Activated B cell treated with CpG ODN at 0.5 μM for 24 hours (primary cell): ENCODE measurements at regions of chr4 and their contacts with region 1.

Region 1: GRCh38 chr4:40682290-40683101 is 52.8 kb upstream of the RBM47 start:
- DNase-seq: no peak
- ATAC-seq: no peak
- H3K4me3 Mint-ChIP-seq: no peak overlapping the region
- H3K27ac Mint-ChIP-seq: no peak overlapping the region
- H3K4me1 Mint-ChIP-seq: no peaks in the 10 kb centered on the region
- H3K27me3 Mint-ChIP-seq: peaks cover 4% of the 10 kb centered on the region
- CTCF ChIP-seq: no peak

Region 2: GRCh38 chr4:40564004-40564403 is 118.5 kb before region 1 on chr4:
- CTCF ChIA-PET with region 1: no interaction called
- POLR2A ChIA-PET with region 1: interaction called, 16 read pairs
- intact Hi-C with region 1: no loop called
- DNase-seq: no peak
- ATAC-seq: no peak
- H3K4me3 Mint-ChIP-seq: no peak overlapping the region
- H3K27ac Mint-ChIP-seq: no peak overlapping the region
- H3K4me1 Mint-ChIP-seq: peaks cover 21% of the 10 kb centered on the region
- H3K27me3 Mint-ChIP-seq: no peaks in the 10 kb centered on the region
- CTCF ChIP-seq: no peak